ENCODE measurements at regions of chr15 and their contacts with region 1.

Region 1: GRCh38 chr15:64209680-64210334 is 47.0 kb upstream of the PPIB start:
- DNase-seq: no peak
- ATAC-seq: peak in 1 of 4 donors; percentile 35
- H3K4me3 ChIP-seq: no peak overlapping the region
- H3K27ac ChIP-seq: no peak overlapping the region
- H3K4me1 ChIP-seq: no peaks in the 10 kb centered on the region
- H3K27me3 ChIP-seq: no peaks in the 10 kb centered on the region
- CTCF ChIP-seq: peak; percentile 45 to 54 (median 48)
- POLR2A ChIP-seq: no peak

Region 2: DNA sequence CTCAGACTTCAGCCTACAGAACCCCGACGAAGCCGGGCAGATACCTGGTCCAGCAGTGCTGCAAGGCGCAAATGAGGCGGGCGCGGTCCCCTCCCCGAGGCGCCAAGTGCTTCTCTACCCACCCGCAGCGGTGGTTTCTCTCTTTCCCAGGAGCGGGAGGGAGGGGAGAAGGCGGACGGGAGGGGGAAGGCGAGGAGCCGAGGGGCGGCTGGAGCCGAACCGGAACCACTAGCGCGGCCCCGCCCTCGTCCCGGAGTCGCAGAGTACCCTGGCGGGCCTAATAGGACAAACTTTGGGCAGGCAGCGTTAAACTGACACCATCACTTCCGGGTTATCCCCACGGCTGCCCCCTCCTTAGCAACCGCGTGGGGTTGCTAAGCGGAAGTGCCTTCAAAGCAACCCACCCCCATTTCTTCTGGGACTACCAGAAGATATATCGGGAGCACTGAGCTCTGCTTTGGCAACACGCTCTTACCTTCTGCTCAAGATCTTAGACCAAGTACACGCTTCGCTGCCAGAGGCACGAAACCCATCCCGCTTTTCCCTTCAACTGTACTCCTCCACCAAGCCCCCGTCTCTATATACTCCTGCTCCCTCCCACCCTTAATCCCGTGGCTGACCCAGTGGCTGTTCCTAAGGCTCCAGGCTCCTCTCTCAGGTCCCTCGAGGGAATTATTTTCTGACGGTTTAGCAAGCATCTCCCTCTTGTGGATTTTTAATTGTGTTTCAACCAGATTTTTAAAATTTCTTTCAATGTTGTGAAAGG is 146.3 kb after region 1 on chr15 and contains the start of gene CSNK1G1:
- intact Hi-C with region 1: loop called (anchors 10 kb)
- DNase-seq: peak; percentile 95 to 97 (median 96)
- ATAC-seq: peak; percentile 99 to 100 (median 99)
- H3K4me3 ChIP-seq: peak within 1 kb of the TSS; percentile 65 to 78 (median 72)
- H3K27ac ChIP-seq: peak within 1 kb of the TSS; percentile 19 to 47 (median 36)
- H3K4me1 ChIP-seq: no peaks in the 10 kb centered on the region
- H3K27me3 ChIP-seq: no peaks in the 10 kb centered on the region
- CTCF ChIP-seq: peak; percentile 44 to 53 (median 46)
- POLR2A ChIP-seq: peak; percentile 24
- total RNA-seq, gene CSNK1G1: 3.9 to 7.1 (median 5.5) TPM

Region 3: DNA sequence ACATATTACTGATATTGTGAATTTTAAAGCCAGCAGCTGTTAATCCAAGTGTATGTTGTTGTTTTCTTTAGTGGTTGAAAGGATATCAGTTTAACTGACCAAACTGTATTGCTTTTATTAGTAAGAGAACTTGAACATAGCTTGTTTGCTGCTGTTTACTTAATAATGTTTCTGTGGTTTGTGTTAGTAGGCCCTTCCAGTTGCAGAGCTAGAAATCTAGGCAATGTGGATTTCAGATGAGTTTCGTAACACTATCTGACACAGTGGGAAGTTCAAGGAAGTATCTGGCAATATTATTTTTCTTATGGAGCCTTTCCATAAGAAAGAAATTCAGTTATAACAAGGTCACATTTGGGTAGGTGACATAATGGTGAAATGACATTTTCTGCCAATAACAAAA is 269.1 kb after region 1 on chr15:
- intact Hi-C with region 1: no loop called
- DNase-seq: no peak
- ATAC-seq: peak; percentile 43 to 79 (median 72)
- H3K4me3 ChIP-seq: no peak overlapping the region
- H3K27ac ChIP-seq: peak overlapping the region in 1 of 3 donors; percentile 38
- H3K4me1 ChIP-seq: peaks cover 0 to 36% (median 6%) of the 10 kb centered on the region in 4 donors
- H3K27me3 ChIP-seq: no peaks in the 10 kb centered on the region
- CTCF ChIP-seq: no peak
- POLR2A ChIP-seq: no peak

Measured in right lobe of liver (tissue), 6 donors.